ENCODE measurements at regions of chr5 and their contacts with region 1.

Region 1: GRCh38 chr5:122413722-122414121 is 101.7 kb downstream of the SNCAIP start:
- DNase-seq: no peak
- H3K4me3 ChIP-seq: no peak overlapping the region
- H3K27ac ChIP-seq: no peak overlapping the region
- H3K4me1 ChIP-seq: no peaks in the 10 kb centered on the region
- H3K27me3 ChIP-seq: no peaks in the 10 kb centered on the region
- CTCF ChIP-seq: no peak
- EP300 ChIP-seq: no peak
- POLR2A ChIP-seq: no peak

Region 2: DNA sequence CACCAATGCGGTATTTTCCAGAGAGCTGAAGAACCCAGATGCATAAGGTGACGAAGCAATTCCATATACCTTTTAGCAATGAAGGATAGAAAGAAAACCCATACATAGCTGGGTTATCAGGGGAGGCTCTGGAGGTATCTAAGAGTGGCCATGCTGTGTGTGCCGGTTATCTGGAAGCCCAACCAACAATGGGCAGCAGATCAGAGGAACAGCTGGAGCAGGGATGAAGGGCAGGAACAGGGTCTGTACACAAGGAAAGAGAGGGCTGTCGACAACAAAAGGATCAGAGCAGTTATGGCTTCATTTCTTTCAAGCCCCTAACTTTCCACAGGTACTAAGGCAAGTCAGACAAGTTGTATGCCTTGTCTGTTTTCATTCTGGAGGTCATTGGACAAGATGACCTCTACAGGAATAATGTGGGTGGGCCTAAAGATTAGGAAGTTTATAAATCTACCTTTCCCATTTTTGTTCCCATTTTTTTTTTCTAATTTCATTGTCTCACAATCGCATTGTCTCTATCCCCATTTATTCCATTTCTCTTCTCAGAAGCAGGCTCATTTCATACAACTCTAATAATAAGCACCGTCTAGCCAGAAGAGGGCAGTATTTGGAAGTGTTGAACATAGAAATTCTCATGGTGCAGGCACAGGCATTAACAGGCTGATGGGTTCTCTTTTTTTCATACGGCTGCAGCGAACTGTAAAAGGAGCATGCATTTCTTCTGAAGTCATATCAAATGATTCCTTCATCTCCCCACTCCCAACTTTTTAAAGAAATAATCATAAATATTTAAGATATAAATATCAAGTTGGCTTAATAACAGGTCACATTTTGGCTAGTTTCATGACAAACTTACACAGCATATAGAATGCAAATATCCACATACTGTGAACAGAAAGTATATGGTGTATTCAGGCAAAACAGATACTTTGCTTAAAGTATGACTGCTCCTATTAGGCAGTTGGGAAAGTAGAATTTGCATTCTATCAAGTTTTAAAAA is 220.9 kb before region 1 on chr5:
- intact Hi-C with region 1: loop called (anchors 5 kb)
- DNase-seq: peak in 1 of 2 donors; percentile 89
- H3K4me3 ChIP-seq: no peak overlapping the region
- H3K27ac ChIP-seq: no peak overlapping the region
- H3K4me1 ChIP-seq: peaks cover 0 to 5% (median 0%) of the 10 kb centered on the region in 4 donors
- H3K27me3 ChIP-seq: no peaks in the 10 kb centered on the region
- CTCF ChIP-seq: peak in 4 of 7 experiments; percentile 31 to 56 (median 44)
- EP300 ChIP-seq: no peak
- POLR2A ChIP-seq: no peak

Region 3: DNA sequence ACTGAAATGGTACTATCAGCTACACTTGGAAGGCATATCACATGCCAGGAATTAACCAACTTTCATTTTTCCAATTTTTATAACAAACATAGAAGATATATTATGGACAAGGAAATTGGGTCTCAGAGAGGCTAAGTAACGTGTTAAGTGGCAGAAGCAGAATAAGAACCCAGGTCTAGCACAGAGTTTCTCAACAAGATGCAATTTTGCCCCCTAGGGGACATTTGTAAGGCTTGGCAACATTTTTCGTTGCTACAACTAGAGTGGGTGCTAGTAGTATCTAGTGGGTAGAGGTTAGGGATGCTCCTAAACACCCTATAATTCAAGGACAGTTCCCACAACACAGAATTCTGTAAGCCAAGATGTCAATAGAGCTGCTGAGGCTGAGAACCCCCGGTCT is 78.9 kb after region 1 on chr5:
- intact Hi-C with region 1: no loop called
- DNase-seq: no peak
- H3K4me3 ChIP-seq: no peak overlapping the region
- H3K27ac ChIP-seq: no peak overlapping the region
- H3K4me1 ChIP-seq: peaks cover 6 to 15% (median 7%) of the 10 kb centered on the region in 4 donors
- H3K27me3 ChIP-seq: no peaks in the 10 kb centered on the region
- CTCF ChIP-seq: no peak
- EP300 ChIP-seq: no peak
- POLR2A ChIP-seq: no peak

Region 4: DNA sequence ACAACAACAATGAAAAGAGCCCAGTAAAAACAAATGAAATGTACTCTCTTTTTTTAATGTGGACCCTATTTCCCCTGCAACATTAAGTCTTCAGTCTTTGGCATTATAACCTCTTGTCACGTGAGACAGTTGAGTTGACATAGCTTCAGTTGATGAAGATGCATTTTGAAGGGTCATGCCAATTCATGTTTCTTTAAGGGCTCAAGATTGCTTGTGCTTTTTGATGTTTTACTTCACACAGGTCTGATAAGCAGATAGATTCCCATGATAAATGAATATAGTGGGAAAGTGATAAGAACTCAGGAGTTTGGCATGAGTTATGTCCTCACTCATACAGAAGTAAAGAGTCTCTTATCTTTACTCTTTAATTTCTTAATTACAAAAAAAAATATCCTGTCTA is 127.7 kb after region 1 on chr5:
- intact Hi-C with region 1: no loop called
- DNase-seq: no peak
- H3K4me3 ChIP-seq: no peak overlapping the region
- H3K27ac ChIP-seq: no peak overlapping the region
- H3K4me1 ChIP-seq: no peaks in the 10 kb centered on the region
- H3K27me3 ChIP-seq: peaks cover 0 to 6% (median 0%) of the 10 kb centered on the region in 3 donors
- CTCF ChIP-seq: no peak
- EP300 ChIP-seq: no peak
- POLR2A ChIP-seq: no peak